ENCODE measurements at regions of chr12 and their contacts with region 1.

Region 1: DNA sequence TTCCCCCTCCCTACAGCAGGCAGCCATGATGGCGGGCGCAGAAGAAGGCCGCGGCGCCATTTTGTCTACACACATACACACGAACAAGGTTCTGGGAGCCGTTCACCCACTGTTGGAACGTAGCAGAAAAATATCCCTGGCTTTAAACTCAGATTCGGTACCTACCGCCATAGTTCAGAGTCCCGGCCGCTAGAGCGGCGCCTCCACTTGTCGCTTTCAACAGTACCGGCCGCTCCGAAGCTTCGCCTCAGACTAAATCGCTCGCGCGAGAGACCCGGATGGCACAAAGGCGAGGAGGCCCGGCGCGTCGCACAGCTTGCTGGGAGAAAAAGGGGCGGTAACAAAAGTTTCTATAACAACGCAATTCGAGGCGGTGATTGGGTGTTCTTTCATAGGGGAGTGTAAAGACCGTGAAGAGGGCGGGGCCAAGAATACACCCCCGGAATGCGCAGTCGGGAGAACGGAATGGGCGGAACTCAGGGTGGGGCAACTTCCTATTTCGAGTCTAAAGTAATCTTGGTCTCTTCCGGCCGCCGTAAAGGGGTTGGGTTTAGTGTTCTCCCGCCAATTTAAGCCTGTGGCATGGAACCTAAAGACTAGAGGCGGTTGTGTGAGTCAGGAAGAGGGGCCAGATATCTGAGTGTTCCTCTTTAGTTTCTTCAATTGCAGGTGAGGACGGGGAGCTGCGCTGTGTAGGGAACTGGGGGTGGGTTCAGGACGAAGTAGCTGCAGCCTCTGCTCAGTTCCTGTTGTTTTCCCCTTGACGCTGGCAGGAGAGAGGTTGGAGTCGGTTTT is at the starts of genes KNTC1 and RSRC2:
- DNase-seq: peak; percentile 98
- total RNA-seq, gene KNTC1: 2.7 TPM
- total RNA-seq, gene RSRC2: 41.2 TPM

Region 2: DNA sequence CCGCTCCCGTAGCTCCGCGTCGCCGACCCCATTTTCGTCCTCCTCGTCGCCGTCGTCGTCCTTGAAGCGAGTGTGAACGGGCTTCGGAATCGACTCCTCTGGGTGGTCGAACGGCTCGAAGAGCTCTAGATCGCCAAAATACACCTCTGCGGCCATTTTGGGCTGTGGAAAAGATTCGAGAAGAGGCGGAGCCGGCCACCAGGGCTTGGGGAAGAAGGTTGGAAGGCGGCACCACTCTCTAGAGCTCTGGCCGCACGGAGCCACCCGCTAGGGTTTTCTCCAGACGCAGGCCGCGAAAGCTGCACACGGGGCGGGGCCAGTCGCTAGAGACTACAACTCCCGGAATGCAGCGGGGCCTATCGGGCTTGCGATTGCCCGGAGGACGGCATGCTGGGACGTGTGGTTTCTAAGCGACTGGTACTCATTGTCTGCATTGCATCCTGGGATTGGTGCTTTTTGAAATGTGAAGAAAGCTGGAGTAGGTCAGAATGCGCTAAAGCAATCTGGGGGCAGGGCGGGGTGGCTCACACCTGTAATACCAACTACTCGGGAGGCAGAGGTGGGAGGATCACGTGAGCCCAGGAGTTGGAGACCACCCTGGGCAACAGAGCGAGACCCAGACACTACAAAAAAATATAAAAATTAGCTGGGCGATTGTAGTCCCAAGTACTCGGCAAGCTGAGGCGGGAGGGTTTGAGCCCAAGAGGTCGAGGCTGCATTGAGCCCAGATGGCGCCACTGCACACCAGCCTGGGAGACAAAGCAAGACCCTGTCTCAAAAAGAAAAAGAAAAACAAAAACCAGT is 26.0 kb before region 1 on chr12 and contains the start of gene ZCCHC8:
- intact Hi-C with region 1: loop called (anchors 1 kb)
- DNase-seq: peak; percentile 99
- total RNA-seq, gene ZCCHC8: 10.1 TPM

Region 3: DNA sequence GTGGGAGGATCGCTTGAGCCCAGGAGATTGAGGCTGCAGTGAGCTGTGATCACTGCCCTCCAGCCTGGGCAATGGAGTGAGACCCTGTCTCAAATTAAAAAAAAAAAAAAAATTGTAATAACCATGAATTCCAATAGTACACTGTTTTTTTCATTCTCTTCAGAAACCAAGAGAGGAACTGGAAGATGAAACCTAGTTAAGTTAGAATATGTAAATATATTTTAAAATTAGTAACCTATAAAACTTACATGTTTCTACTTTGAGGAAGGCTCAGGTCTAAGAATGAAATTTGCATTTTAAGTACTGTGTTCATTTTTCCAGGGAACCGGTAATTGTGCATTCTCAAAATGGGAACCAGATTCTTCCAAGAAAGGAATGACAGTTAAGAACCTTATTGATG is 19.0 kb after region 1 on chr12:
- intact Hi-C with region 1: no loop called
- DNase-seq: no peak

Region 4: DNA sequence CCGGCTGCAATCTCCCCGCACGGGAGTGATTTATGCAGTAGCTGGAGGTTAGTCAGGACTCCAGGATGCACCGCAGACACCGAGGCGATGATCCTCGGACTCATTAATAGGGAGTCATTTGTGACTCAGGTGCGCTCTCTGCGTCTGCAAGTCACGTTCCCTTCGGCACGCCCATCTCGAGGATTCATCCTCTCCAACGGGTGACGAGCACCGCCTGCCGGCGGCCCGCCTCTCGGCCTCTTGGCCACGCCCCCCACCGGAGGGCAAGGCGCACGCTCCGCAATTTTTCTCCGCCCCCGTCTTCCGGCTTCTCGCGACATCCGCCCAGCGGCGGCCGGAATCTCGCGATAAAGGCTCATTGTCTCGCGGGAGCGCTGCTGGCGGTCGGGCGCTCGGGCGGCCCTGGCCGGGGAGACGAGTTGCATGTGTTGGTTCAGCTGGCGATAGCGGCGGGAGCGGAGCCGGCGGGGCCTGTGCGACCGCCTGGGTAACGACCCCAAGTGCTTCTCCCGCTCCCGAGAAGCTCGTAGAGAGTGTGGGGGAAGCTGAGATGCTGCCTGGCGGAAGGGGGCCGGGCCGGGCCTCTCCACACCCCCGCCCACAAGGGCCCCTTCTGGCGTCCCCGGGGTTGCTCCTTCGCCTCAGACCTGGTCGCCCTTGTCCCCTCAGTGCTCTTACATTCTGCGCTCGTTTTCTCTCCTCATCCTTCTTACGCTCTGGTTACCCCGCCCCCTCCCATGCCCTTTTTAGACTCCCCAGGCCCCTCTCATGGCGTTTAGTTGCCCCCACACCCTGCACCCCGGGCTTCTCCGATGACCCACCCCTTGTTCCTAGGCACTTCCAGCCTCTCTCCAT is 225.8 kb after region 1 on chr12 and contains the start of gene DENR:
- intact Hi-C with region 1: loop called (anchors 5 kb)
- DNase-seq: peak; percentile 99
- total RNA-seq, gene DENR: 23.8 TPM